ENCODE measurements at regions of chr2 and their contacts with region 1.

Region 1: GRCh38 chr2:63692002-63692606 is 103.3 kb downstream of the MDH1 start:
- DNase-seq: peak; percentile 34
- H3K4me3 Mint-ChIP-seq: no peak overlapping the region
- H3K27ac Mint-ChIP-seq: no peak overlapping the region
- H3K4me1 Mint-ChIP-seq: no peaks in the 10 kb centered on the region
- H3K27me3 Mint-ChIP-seq: no peaks in the 10 kb centered on the region
- CTCF ChIP-seq: peak; percentile 32

Region 2: GRCh38 chr2:63500398-63500797 is 191.7 kb before region 1 on chr2:
- CTCF ChIA-PET with region 1: no interaction called
- intact Hi-C with region 1: no loop called
- DNase-seq: no peak
- H3K4me3 Mint-ChIP-seq: no peak overlapping the region
- H3K27ac Mint-ChIP-seq: no peak overlapping the region
- H3K4me1 Mint-ChIP-seq: peaks cover 15% of the 10 kb centered on the region
- H3K27me3 Mint-ChIP-seq: no peaks in the 10 kb centered on the region
- CTCF ChIP-seq: no peak

Region 3: GRCh38 chr2:63555939-63556338 is 136.2 kb before region 1 on chr2:
- CTCF ChIA-PET with region 1: no interaction called
- intact Hi-C with region 1: no loop called
- DNase-seq: no peak
- H3K4me3 Mint-ChIP-seq: no peak overlapping the region
- H3K27ac Mint-ChIP-seq: no peak overlapping the region
- H3K4me1 Mint-ChIP-seq: peaks cover 23% of the 10 kb centered on the region
- H3K27me3 Mint-ChIP-seq: no peaks in the 10 kb centered on the region
- CTCF ChIP-seq: no peak

Region 4: GRCh38 chr2:63861220-63861822 is 169.2 kb after region 1 on chr2:
- CTCF ChIA-PET with region 1: interaction called, 3 read pairs
- intact Hi-C with region 1: loop called (anchors 1 kb)
- DNase-seq: peak; percentile 51
- H3K4me3 Mint-ChIP-seq: no peak overlapping the region
- H3K27ac Mint-ChIP-seq: peak overlapping the region; percentile 54
- H3K4me1 Mint-ChIP-seq: peaks cover 44% of the 10 kb centered on the region
- H3K27me3 Mint-ChIP-seq: no peaks in the 10 kb centered on the region
- CTCF ChIP-seq: peak; percentile 38